ENCODE measurements at regions of chr15 and their contacts with region 1.

Region 1: GRCh38 chr15:55799291-55800212 is 56.6 kb upstream of the PRTG start:
- DNase-seq: peak; percentile 70
- ATAC-seq: peak; percentile 80
- H3K4me3 ChIP-seq: no peak overlapping the region
- H3K27ac ChIP-seq: no peak overlapping the region
- H3K4me1 ChIP-seq: no peaks in the 10 kb centered on the region
- H3K27me3 ChIP-seq: no peaks in the 10 kb centered on the region
- CTCF ChIP-seq: peak; percentile 53

Region 2: DNA sequence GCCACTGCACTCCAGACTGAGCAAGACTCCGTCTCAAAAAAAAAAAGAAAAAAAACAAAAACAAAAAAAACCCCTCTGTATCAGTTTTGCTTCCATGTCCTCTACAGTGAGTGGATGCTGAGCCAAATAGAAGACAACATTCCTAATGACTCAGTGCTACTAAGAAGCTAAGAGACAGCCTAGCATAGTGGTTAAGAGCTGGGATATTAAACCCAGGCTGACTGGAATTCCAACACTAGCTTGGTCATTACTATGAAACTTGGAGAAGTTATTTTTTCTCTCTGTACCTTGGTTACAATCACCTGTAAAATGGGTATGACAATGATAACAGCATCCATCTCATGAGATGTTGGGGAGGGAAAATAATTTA is 150.5 kb before region 1 on chr15:
- intact Hi-C with region 1: loop called (anchors 10 kb)
- DNase-seq: no peak
- ATAC-seq: no peak
- H3K4me3 ChIP-seq: no peak overlapping the region
- H3K27ac ChIP-seq: no peak overlapping the region
- H3K4me1 ChIP-seq: no peaks in the 10 kb centered on the region
- H3K27me3 ChIP-seq: no peaks in the 10 kb centered on the region
- CTCF ChIP-seq: no peak